ENCODE measurements at regions of chr15 and their contacts with region 1.

Region 1: DNA sequence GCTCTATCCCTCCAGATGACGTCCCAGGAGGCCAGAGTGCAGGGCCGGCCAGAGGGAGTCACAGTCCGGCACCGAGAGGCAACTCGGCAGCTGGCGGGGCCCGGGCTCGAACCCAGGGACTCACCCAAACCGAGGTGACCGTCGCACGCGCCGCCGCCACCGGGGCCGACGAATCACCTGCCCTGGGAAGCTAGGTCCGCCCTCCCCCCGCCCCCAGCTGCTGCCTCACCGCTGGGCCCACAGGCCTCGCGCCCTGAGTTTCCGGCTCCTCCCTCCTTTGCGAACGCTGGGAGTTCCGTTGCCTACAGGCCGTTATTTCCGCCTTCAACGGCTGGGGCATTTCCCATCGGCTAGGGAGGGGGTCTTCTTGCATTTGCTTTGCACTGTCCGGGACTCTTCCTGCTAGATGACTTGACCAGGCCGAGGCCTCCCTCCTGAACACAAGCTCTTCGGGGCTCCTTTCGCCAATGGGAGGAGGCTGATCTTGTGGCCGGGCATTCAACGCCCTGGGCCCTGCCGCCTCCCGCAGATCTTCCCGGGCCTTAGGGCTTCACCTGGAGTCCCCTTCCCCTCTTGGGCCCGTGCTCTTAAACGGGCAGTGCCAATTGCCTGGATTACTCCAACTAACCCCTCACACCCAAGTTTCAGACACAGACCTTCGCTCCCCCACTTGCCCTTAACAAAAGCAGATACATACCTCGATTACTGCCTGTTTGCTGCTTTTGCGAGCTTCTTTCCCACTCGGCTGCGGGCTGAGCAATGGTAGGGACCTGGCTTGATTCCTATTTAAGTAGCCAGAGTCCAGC is at the start of gene SNUPN:
- DNase-seq: peak; percentile 90
- ATAC-seq: peak; percentile 83
- H3K4me3 ChIP-seq: peak within 1 kb of the TSS; percentile 91 to 99
- H3K27ac ChIP-seq: peak within 1 kb of the TSS; percentile 99
- H3K4me1 ChIP-seq: peaks cover 16 to 40% of the 10 kb centered on the region in 2 experiments
- H3K27me3 ChIP-seq: no peaks in the 10 kb centered on the region
- CTCF ChIP-seq: no peak
- POLR2A ChIP-seq: peak; percentile 87
- RAD21 ChIP-seq: no peak
- total RNA-seq, gene SNUPN: 29.8 TPM

Region 2: GRCh38 chr15:75554717-75555116 is 71.0 kb before region 1 on chr15:
- CTCF ChIA-PET with region 1: no interaction called
- POLR2A ChIA-PET with region 1: no interaction called
- RAD21 ChIA-PET with region 1: no interaction called
- intact Hi-C with region 1: no loop called
- DNase-seq: no peak
- ATAC-seq: no peak
- H3K4me3 ChIP-seq: no peak overlapping the region
- H3K27ac ChIP-seq: no peak overlapping the region
- H3K4me1 ChIP-seq: no peaks in the 10 kb centered on the region
- H3K27me3 ChIP-seq: no peaks in the 10 kb centered on the region
- CTCF ChIP-seq: no peak
- POLR2A ChIP-seq: no peak
- RAD21 ChIP-seq: no peak

Region 3: GRCh38 chr15:75666823-75667501 is 41.2 kb after region 1 on chr15:
- CTCF ChIA-PET with region 1: no interaction called
- POLR2A ChIA-PET with region 1: no interaction called
- RAD21 ChIA-PET with region 1: interaction called in 1 of 2 experiments, 4 read pairs
- intact Hi-C with region 1: loop called (anchors 5 kb)
- DNase-seq: peak; percentile 91
- ATAC-seq: peak; percentile 62
- H3K4me3 ChIP-seq: peak overlapping the region in 1 of 2 experiments; percentile 13; a peak in 1 of 4 replicates
- H3K27ac ChIP-seq: peak overlapping the region; percentile 53
- H3K4me1 ChIP-seq: peaks cover 53 to 85% of the 10 kb centered on the region in 2 experiments
- H3K27me3 ChIP-seq: no peaks in the 10 kb centered on the region
- CTCF ChIP-seq: no peak
- POLR2A ChIP-seq: no peak
- RAD21 ChIP-seq: no peak

Region 4: GRCh38 chr15:75943713-75944215 is 318.0 kb after region 1 on chr15:
- CTCF ChIA-PET with region 1: no interaction called
- POLR2A ChIA-PET with region 1: no interaction called
- RAD21 ChIA-PET with region 1: no interaction called
- intact Hi-C with region 1: no loop called
- DNase-seq: no peak
- ATAC-seq: peak; percentile 40; the same call in 1 of the 2 replicates
- H3K4me3 ChIP-seq: no peak overlapping the region
- H3K27ac ChIP-seq: no peak overlapping the region
- H3K4me1 ChIP-seq: no peaks in the 10 kb centered on the region
- H3K27me3 ChIP-seq: no peaks in the 10 kb centered on the region
- CTCF ChIP-seq: no peak
- POLR2A ChIP-seq: no peak
- RAD21 ChIP-seq: no peak